Transverse colon (tissue), 4 donors: ENCODE measurements at regions of chr16 and their contacts with region 1.

Region 1: DNA sequence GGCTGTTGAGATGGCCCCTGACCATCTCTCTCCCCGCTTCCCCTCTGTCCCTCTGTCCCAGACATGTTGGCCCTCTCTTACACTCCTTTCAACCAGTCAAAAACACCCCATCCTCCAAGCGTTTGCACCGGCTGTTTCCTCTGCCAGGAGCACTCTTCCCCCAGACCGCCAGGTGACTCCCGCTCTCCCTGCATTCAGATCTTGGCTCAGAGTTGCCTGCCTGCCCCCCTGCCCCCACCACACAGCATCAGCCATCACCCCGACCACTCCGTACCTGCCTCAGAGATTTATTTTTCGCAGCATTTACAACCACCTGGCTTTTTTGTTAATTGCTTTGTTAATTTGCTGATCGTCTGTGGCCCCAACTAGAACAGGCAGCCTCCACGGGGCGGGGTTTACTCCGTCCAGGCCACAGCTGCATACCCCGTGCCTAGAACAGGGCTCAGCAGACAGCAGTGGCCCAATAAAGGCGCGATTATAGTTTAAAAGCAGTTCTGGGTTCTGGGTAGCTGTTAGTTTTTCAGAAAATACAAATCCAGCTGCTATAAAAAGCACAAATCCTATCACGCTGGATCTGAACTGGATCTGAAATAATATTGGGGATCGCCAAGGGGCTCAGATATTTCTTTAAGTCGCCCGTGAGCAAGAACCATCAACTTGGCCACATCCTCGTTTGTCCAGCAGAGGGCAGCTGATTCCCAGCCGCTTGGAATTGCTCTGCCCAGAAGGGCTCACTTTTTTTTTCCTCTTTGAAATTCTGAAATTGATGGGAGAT is 173.6 kb downstream of the IRF8 start:
- DNase-seq: peak; percentile 69
- H3K4me3 ChIP-seq: no peak overlapping the region
- H3K27ac ChIP-seq: no peak overlapping the region
- H3K4me1 ChIP-seq: no peaks in the 10 kb centered on the region
- H3K27me3 ChIP-seq: no peaks in the 10 kb centered on the region
- CTCF ChIP-seq: peak; percentile 70 to 85 (median 81)
- EP300 ChIP-seq: no peak
- POLR2A ChIP-seq: no peak

Region 2: GRCh38 chr16:86118467-86119307 is 46.2 kb after region 1 on chr16:
- in situ Hi-C with region 1: no loop called
- intact Hi-C with region 1: no loop called
- DNase-seq: peak; percentile 47
- H3K4me3 ChIP-seq: no peak overlapping the region
- H3K27ac ChIP-seq: peak overlapping the region in 1 of 4 donors; percentile 48
- H3K4me1 ChIP-seq: peaks cover 0 to 17% (median 8%) of the 10 kb centered on the region in 4 donors
- H3K27me3 ChIP-seq: no peaks in the 10 kb centered on the region
- CTCF ChIP-seq: no peak
- EP300 ChIP-seq: no peak
- POLR2A ChIP-seq: no peak

Region 3: GRCh38 chr16:86167061-86167460 is 94.5 kb after region 1 on chr16:
- in situ Hi-C with region 1: no loop called
- intact Hi-C with region 1: no loop called
- DNase-seq: peak; percentile 17
- H3K4me3 ChIP-seq: no peak overlapping the region
- H3K27ac ChIP-seq: peak overlapping the region in 3 of 4 donors; percentile 14 to 43 (median 31)
- H3K4me1 ChIP-seq: no peaks in the 10 kb centered on the region
- H3K27me3 ChIP-seq: no peaks in the 10 kb centered on the region
- CTCF ChIP-seq: no peak
- EP300 ChIP-seq: no peak
- POLR2A ChIP-seq: no peak

Region 4: DNA sequence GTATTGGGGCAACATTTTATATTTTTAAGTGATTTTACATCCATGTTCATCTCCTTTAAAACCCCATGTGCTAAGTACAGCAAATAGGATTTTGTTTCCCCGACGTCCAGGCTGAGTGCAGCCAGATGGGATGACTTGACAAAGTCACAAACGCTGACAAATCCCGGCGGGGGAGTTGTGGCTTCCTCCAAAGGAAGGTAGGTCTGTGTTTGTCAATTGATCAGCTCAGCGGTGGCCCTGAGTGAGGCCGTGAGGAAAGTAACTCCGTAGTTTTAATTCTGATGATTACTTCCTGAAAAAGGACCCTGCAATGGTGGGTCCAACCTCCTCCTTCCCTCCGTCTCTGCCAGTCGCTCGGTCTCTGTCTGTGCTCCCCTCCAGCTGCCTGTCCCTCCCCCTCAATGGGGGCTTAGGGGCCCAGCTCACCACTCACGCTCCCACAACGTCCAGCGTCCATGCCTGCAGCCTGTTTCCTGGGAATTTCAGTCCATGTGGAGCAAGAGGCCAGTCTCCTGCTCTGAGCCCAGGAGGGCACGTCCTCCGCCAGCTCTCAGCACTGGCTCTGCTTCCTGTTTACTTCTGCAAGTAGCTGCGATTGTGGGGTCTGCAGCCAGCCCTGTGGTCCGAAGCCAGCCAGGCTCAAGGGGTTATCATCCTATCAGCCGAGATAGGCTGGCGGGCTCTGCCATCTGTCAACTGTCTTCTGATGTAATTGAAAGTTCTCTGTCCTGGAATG is 228.4 kb after region 1 on chr16:
- in situ Hi-C with region 1: no loop called
- intact Hi-C with region 1: loop called (anchors 10 kb)
- DNase-seq: no peak
- H3K4me3 ChIP-seq: peak overlapping the region in 1 of 4 donors; percentile 25
- H3K27ac ChIP-seq: peak overlapping the region; percentile 89 to 95 (median 92)
- H3K4me1 ChIP-seq: peaks cover 6 to 34% (median 13%) of the 10 kb centered on the region in 4 donors
- H3K27me3 ChIP-seq: peaks cover 25% of the 10 kb centered on the region
- CTCF ChIP-seq: no peak
- EP300 ChIP-seq: no peak
- POLR2A ChIP-seq: no peak

Region 5: DNA sequence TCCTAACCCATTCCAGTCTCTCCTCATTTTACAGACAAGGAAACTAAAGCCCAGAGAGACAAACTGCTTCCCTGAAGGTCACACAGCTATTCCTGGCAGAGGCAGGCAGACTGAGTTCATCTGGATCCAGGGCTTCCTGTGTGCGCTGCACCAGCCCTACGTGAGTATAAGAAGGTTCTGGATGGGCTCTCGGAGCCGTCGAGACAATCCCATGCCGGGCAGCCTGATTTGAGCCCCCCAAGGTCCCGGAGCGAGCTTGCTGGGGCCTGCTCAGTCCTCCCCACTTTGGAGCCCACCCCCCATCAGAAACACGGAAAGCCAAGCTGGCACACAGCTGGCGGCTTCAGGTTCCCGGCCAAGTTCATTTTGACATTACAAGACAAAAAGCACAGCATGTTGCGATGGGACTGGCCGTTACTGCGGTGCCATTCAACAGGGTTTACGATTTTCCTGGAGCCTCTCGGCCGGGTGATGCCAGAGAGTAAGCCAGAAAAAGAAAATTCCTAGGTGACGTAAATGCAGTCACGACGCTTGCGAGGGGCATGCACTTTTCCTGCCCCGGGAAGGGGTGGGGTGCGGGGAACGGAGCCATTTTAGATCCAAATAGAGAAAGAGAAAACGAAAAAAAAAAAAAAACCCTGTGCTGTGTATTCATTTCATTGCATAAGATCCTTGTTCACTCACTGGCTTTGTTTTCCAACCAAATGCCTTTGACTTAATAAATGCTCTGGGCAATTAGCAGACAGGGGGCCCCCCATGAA is 270.7 kb after region 1 on chr16:
- in situ Hi-C with region 1: loop called in 1 of 4 experiments (anchors 10 kb)
- intact Hi-C with region 1: loop called (anchors 10 kb)
- DNase-seq: peak; percentile 68
- H3K4me3 ChIP-seq: no peak overlapping the region
- H3K27ac ChIP-seq: peak overlapping the region; percentile 83 to 93 (median 90)
- H3K4me1 ChIP-seq: peaks cover 7 to 21% (median 16%) of the 10 kb centered on the region in 4 donors
- H3K27me3 ChIP-seq: peaks cover 10% of the 10 kb centered on the region
- CTCF ChIP-seq: no peak
- EP300 ChIP-seq: peak; percentile 98
- POLR2A ChIP-seq: no peak